Activated naive CD4-positive, alpha-beta T cell treated with anti-CD3 and anti-CD28 coated beads for 36 hours (primary cell): ENCODE measurements at regions of chr7 and their contacts with region 1.

Region 1: DNA sequence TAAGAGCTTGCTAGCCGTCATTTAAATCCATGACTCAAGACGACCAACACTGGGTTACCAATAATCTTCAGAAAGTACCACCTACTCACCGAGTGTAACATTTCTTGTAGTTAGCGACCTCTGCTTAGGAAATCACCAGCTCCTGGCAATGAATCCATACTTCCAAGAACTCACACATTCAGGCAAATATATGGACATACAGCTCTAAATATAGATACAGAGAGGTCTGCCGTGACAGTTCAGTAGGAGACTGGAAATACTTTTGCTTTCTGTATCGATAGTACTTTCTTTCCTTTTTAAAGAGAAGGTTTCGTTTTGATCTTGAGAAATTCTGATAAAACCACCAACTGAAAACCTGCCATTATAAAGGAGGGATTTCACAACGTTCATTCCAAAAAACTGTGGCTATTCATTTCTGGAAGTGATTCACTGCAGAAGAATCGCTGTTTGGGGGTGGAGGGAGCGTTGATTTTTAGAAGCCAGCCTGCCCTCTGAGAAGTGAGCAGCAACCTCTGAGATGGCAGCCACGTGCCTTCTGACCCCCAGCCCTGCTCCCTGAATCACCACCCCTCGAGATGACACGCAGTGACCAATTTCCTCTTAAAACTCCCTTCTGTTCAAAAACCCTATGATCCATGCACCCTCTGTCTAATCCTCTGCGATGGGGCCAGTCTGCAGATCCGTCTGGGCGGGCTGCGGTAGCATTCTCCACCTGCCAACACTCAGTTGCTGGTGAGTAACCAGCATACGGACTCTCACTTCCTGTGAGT is 179.0 kb upstream of the KLF14 start:
- DNase-seq: peak; percentile 92
- H3K4me3 Mint-ChIP-seq: peak overlapping the region; percentile 81
- H3K27ac Mint-ChIP-seq: peak overlapping the region; percentile 97
- H3K4me1 Mint-ChIP-seq: peaks cover 91% of the 10 kb centered on the region
- H3K27me3 Mint-ChIP-seq: no peaks in the 10 kb centered on the region

Region 2: DNA sequence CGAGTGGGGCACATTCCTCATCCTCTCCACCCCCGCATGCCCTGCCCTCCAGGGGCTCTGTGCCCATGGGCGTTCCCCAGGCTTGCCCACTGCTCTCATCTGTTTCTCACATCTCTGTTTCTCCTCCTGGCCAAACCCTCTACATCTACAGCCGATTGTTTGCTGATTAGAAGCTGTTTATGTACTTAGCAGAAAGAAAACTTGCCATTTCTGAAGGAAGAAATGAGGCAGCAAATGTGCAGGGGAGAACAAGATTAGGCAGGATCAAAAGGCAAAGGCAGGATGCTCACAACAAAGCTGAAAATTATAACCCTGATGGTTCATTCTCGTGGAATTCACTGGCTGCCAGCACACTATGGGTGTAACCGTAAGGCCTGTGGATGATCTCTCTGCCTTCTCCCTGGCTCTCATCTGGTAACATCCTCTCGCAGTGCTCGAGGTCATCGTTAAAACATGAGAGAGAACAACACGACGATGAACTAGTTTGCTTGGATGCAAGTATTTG is 67.4 kb before region 1 on chr7:
- CTCF ChIA-PET with region 1: no interaction called
- intact Hi-C with region 1: no loop called
- DNase-seq: no peak
- H3K4me3 Mint-ChIP-seq: no peak overlapping the region
- H3K27ac Mint-ChIP-seq: no peak overlapping the region
- H3K4me1 Mint-ChIP-seq: peaks cover 13% of the 10 kb centered on the region
- H3K27me3 Mint-ChIP-seq: peaks cover 28% of the 10 kb centered on the region

Region 3: GRCh38 chr7:130896898-130897514 is 16.0 kb before region 1 on chr7:
- CTCF ChIA-PET with region 1: interaction called, 16 read pairs
- intact Hi-C with region 1: loop called (anchors 1 kb)
- DNase-seq: peak; percentile 85
- H3K4me3 Mint-ChIP-seq: no peak overlapping the region
- H3K27ac Mint-ChIP-seq: peak overlapping the region; percentile 85
- H3K4me1 Mint-ChIP-seq: peaks cover 88% of the 10 kb centered on the region
- H3K27me3 Mint-ChIP-seq: no peaks in the 10 kb centered on the region

Region 4: GRCh38 chr7:130961128-130961601 is 48.1 kb after region 1 on chr7:
- CTCF ChIA-PET with region 1: interaction called, 8 read pairs
- intact Hi-C with region 1: loop called (anchors 1 kb)
- DNase-seq: peak; percentile 92
- H3K4me3 Mint-ChIP-seq: peak overlapping the region; percentile 87
- H3K27ac Mint-ChIP-seq: peak overlapping the region; percentile 99
- H3K4me1 Mint-ChIP-seq: peaks cover 36% of the 10 kb centered on the region
- H3K27me3 Mint-ChIP-seq: no peaks in the 10 kb centered on the region

Region 5: GRCh38 chr7:131027287-131027773 is 114.3 kb after region 1 on chr7:
- CTCF ChIA-PET with region 1: interaction called, 3 read pairs
- intact Hi-C with region 1: loop called (anchors 1 kb)
- DNase-seq: peak; percentile 52
- H3K4me3 Mint-ChIP-seq: no peak overlapping the region
- H3K27ac Mint-ChIP-seq: peak overlapping the region; percentile 74
- H3K4me1 Mint-ChIP-seq: peaks cover 86% of the 10 kb centered on the region
- H3K27me3 Mint-ChIP-seq: no peaks in the 10 kb centered on the region

Region 6: DNA sequence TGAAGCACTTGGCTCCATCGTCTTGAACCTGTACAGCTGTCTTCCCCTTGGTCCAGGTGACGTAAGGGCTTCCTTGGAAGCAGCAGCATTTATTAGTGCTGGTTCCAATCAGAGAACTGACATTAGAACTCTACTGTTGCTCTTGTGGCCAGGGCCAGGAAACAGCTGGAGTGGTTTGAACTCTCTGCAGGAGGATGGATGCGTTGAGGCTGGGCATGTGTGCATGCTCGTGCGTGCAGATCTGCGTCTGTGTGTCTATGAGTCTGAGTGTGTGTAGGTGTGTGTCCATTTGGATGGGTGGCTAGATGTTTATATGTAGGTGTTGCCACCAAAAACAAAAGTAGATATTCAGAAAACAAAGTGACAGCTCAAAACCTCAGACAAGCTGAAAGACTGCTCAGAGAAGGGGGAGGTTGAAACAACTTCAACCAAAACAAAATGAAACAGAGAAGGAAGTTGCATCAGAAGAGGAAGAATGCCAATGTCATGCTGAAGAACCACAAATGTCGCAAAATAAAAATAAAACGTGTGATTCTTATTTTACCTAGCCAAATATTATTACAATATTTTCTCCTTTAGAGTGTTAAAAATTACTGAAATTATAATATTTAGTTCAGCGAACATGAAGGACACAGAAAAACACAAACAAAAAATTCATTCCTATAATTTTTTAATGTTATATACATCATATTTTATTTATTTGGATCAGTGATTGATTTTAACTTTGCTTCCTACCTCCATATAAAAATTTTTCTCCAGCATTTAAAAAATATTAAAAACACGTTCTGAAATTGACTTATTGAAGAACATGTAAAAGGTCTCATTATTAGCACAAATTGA is 318.6 kb after region 1 on chr7:
- CTCF ChIA-PET with region 1: no interaction called
- intact Hi-C with region 1: loop called (anchors 1 kb)
- DNase-seq: peak; percentile 80
- H3K4me3 Mint-ChIP-seq: peak overlapping the region; percentile 57
- H3K27ac Mint-ChIP-seq: peak overlapping the region; percentile 86
- H3K4me1 Mint-ChIP-seq: peaks cover 45% of the 10 kb centered on the region
- H3K27me3 Mint-ChIP-seq: no peaks in the 10 kb centered on the region

Region 7: DNA sequence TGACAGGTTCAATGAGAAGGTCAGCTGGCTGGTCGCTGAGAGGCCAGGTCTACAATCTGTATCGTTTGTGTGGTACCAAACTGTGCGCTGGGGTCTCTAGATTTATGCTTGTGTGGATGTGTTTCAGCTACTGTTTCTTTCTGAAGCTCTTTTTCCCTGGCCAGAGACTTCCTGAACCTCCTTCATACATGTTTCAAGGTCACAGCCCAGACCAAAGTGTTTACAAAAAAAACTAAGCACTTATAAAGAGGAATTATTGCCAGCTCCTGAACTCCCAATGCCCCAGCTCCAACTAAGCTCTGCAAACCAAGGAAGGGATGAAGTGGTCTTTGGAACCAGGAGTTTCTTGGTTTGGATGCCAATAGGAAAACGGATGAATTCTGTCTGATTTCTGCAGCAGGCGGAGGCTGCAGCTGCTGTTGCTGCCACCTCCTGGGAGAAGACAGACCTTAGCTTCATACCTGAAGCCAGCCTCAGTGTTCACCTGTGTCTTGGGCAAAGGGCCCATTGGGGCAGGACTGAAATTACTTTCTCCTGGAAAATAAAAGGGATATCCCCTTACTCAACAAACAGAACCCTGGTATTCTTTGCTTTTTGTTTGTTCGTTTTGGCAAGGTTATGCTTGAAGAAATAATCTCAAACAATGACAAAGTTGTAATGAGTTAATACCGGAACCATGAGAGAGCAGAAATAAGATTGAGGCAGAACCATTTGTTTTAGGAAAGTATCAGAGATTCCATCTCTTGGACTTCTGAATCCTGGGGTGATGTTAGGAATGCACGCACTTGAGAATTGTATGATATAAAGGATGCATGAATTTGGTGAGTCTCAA is 390.0 kb after region 1 on chr7:
- CTCF ChIA-PET with region 1: no interaction called
- intact Hi-C with region 1: no loop called
- DNase-seq: peak; percentile 53
- H3K4me3 Mint-ChIP-seq: no peak overlapping the region
- H3K27ac Mint-ChIP-seq: no peak overlapping the region
- H3K4me1 Mint-ChIP-seq: peaks cover 5% of the 10 kb centered on the region
- H3K27me3 Mint-ChIP-seq: no peaks in the 10 kb centered on the region